ENCODE measurements at regions of chr1 and their contacts with region 1.

Region 1: DNA sequence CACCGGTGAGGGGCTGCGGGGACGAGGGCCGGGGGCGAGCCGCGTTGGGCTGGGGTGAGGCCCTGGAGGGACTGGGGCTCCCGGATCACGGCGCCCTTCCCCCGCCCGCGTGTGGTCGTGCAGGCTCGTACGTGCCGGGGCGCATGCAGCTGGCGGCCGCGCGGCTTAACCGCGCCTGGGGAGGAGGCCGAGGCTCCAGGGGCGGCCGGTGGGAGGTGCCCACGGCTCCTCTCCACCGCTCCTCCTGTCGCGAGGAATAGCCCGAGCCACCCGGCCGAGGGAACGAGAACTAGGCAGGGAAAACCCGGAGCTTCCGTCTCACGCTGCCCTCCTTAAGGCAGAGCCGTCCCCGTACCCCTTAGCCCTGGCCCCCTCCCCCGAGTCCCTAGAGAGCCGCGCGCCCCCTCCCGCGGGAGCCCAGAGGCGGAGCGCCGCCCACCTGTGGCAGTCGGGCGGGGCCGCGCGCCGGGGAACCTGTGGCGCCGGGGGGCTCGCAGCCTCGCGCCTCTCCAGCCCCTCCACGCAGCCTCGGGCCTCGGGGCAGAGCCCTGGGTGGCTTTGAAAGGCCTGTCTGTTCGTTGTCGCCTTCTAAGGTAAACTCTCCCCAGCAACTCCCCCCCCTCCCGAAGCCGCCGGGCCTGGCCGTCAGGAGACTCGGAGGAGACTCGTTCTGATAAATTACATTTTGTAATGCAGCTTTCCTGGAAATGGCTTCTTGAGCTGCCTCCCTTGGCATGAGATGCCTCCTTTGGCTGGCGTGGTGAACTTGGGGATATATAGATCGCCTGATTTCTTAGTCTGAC is 746 bp downstream of the AK4 start:
- DNase-seq: peak; percentile 44 to 50
- H3K4me3 ChIP-seq: peak overlapping the region; percentile 81
- H3K4me3 Mint-ChIP-seq: peak overlapping the region; percentile 79
- H3K27ac Mint-ChIP-seq: peak overlapping the region; percentile 57
- H3K4me1 ChIP-seq: peaks cover 28% of the 10 kb centered on the region
- H3K4me1 Mint-ChIP-seq: peaks cover 10% of the 10 kb centered on the region
- H3K27me3 ChIP-seq: no peaks in the 10 kb centered on the region
- H3K27me3 Mint-ChIP-seq: no peaks in the 10 kb centered on the region
- CTCF ChIP-seq: no peak

Region 2: DNA sequence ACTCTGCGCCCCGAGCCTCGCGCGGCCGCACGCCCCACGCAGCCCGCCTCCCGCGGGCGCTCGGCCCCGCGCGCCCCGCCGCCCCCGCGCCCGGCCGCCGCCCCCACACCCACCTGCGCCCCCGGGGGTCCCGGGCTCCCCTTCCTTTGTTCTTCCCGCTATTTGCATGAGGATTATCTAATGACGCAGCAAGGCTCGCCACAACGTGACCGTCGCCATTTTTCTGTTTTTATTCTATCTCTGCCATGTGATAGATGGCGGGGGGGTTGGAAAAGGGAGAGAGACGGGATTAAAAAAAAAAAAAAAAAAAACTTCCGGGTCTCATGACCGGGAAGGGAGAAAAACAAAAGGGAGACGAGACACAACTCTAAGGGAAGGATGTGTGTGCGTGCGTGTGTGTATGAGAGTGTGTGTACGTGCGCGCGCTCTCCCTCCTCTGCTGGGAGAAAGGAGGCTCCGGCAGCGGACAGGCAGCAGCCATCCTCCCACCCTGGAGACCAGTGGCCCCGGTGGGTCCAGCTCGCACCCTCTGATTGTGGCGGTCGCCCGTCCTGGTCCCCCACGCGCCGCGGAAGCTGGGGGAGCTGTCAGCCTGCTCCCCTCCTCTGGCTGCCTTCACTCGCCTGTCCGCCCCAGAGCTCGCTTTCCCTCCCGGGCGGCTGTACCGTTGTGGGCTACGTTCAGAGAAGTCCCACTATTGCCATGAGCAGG is 81.1 kb before region 1 on chr1:
- CTCF ChIA-PET with region 1: interaction called, 3 read pairs
- POLR2A ChIA-PET with region 1: no interaction called
- intact Hi-C with region 1: loop called (anchors 5 kb)
- DNase-seq: peak; percentile 53 to 54
- H3K4me3 ChIP-seq: peak overlapping the region; percentile 56
- H3K4me3 Mint-ChIP-seq: peak overlapping the region; percentile 80
- H3K27ac Mint-ChIP-seq: peak overlapping the region; percentile 91
- H3K4me1 ChIP-seq: no peaks in the 10 kb centered on the region
- H3K4me1 Mint-ChIP-seq: peaks cover 13% of the 10 kb centered on the region
- H3K27me3 ChIP-seq: no peaks in the 10 kb centered on the region
- H3K27me3 Mint-ChIP-seq: no peaks in the 10 kb centered on the region
- CTCF ChIP-seq: no peak

Region 3: DNA sequence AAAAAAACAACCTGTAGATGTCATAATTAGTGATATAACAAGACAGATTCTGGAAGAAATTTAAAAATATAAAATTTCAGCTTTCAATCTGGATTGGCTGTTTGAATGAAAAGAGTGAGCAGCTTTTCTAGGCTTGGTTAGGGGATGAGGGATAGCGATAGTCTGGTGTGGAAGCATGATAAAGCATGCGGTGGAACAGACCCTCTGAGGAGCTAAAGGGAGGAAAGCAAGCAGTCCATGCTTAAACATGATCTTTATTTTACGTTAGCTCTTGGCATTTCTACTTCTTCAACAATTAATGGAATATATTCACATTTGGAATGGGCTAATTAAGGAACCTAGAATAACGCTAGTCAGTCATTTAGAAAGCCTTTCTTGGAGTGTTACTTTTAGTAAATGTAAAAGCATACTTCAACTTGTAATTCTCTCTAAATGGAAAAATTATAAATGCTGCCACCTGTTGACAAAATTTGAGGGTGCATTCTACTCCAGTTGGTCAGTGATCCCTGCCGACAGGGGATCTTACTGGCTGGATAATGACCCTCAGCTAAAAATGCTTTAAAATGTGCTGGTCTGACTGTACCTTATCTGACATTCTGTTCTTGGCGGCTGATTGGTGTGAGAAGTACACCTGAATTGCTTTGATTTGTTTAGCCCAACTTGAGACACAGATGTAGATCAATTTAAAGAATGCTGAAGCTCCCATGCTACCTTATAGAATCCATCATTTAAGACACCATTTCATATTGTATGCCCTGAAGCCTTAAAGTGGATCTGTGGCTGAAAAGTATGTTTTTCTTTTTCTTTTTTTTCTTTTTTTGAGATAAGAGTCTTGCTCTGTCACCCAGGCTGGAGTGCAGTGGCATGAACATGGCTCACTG is 60.5 kb after region 1 on chr1:
- CTCF ChIA-PET with region 1: interaction called, 3 read pairs
- POLR2A ChIA-PET with region 1: no interaction called
- intact Hi-C with region 1: loop called (anchors 2 kb)
- DNase-seq: peak in 1 of 2 experiments; percentile 52
- H3K4me3 ChIP-seq: no peak overlapping the region
- H3K4me3 Mint-ChIP-seq: no peak overlapping the region
- H3K27ac Mint-ChIP-seq: peak overlapping the region; percentile 73
- H3K4me1 ChIP-seq: peaks cover 32% of the 10 kb centered on the region
- H3K4me1 Mint-ChIP-seq: peaks cover 34% of the 10 kb centered on the region
- H3K27me3 ChIP-seq: no peaks in the 10 kb centered on the region
- H3K27me3 Mint-ChIP-seq: no peaks in the 10 kb centered on the region
- CTCF ChIP-seq: peak; percentile 27 to 39

Measured in Caco-2 (cell line).